MCF 10A (cell line): ENCODE measurements at regions of chr3 and their contacts with region 1.

Region 1: DNA sequence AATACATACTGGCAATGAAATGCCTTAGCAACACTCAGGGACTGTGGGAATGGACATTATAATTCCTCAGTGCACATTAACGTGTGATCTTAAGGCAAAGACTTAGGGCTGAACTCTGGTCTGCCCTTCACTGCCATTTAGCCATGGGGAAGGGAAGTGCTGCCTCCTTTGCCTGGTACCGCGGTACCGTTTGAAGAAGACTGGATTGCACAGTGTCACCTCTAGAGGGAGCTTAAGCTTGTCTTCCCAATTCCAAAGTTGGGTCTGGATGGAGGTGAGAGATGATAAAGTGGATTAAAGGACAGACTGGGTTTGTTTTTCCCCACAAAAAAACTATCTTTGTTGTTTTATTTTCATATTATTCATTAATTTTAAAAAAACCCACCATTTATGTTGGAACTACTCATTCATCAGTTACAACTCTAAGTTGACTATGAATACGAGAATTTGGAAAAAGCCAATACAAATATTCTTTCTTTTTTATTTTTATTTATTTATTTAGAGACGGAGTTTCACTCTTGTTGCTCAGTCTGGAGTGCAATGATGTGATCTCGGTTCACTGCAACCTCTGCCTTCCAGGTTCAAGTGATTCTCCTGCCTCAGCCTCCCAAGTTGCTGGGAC is 60.0 kb upstream of the SYN2 start:
- DNase-seq: peak; percentile 60
- H3K4me3 Mint-ChIP-seq: no peak overlapping the region
- H3K27ac Mint-ChIP-seq: no peak overlapping the region
- H3K4me1 Mint-ChIP-seq: no peaks in the 10 kb centered on the region
- H3K27me3 Mint-ChIP-seq: peaks cover 17% of the 10 kb centered on the region
- CTCF ChIP-seq: peak; percentile 50

Region 2: GRCh38 chr3:11954312-11954934 is 10.3 kb after region 1 on chr3:
- CTCF ChIA-PET with region 1: interaction called, 13 read pairs
- POLR2A ChIA-PET with region 1: interaction called, 3 read pairs
- intact Hi-C with region 1: no loop called
- DNase-seq: peak; percentile 56
- H3K4me3 Mint-ChIP-seq: no peak overlapping the region
- H3K27ac Mint-ChIP-seq: no peak overlapping the region
- H3K4me1 Mint-ChIP-seq: no peaks in the 10 kb centered on the region
- H3K27me3 Mint-ChIP-seq: peaks cover 32% of the 10 kb centered on the region
- CTCF ChIP-seq: no peak

Region 3: DNA sequence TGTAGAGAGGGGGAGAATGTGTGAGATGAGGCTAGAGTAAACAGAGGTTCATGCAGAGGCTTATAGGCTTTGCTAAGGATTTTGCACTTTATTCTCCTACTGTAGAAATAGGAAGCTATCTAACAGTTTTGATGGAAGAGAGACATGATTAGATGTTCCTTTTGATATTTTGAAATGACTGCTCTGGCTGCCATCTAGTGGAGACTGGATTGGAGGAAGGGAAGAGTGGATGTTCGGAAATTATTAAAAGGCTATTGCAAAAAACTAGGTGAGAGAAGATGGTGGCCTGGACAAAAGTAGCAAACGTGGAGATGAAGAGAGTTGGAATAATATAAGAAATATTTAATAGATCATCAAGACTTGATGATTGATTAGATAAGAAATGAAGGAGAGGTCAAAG is 102.2 kb after region 1 on chr3:
- CTCF ChIA-PET with region 1: no interaction called
- POLR2A ChIA-PET with region 1: no interaction called
- intact Hi-C with region 1: loop called (anchors 1 kb)
- DNase-seq: peak; percentile 22
- H3K4me3 Mint-ChIP-seq: no peak overlapping the region
- H3K27ac Mint-ChIP-seq: no peak overlapping the region
- H3K4me1 Mint-ChIP-seq: no peaks in the 10 kb centered on the region
- H3K27me3 Mint-ChIP-seq: peaks cover under 1% of the 10 kb centered on the region
- CTCF ChIP-seq: no peak

Region 4: DNA sequence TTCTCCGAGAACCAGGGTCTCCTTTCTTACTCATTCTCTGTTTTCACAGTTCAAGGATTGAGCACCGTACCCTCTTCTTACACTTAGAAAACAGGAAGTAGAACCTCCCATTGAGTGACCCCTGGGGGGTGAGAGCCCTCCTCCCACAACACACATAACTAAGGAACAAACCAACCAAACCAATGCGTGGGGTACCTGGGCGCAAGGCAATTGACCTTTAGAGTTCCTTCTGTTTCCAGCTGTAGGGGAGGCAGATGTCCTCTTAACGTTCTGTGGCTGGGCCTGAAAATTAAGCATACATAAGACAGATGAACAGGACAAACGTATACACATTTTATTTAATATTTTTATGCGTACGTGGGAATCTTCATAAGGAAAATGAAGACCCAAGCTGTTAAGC is 248.0 kb after region 1 on chr3:
- CTCF ChIA-PET with region 1: no interaction called
- POLR2A ChIA-PET with region 1: no interaction called
- intact Hi-C with region 1: no loop called
- DNase-seq: no peak
- H3K4me3 Mint-ChIP-seq: no peak overlapping the region
- H3K27ac Mint-ChIP-seq: peak overlapping the region; percentile 89
- H3K4me1 Mint-ChIP-seq: peaks cover 51% of the 10 kb centered on the region
- H3K27me3 Mint-ChIP-seq: no peaks in the 10 kb centered on the region
- CTCF ChIP-seq: no peak

Region 5: GRCh38 chr3:12336099-12336498 is 391.9 kb after region 1 on chr3:
- CTCF ChIA-PET with region 1: no interaction called
- POLR2A ChIA-PET with region 1: no interaction called
- intact Hi-C with region 1: no loop called
- DNase-seq: no peak
- H3K4me3 Mint-ChIP-seq: no peak overlapping the region
- H3K27ac Mint-ChIP-seq: no peak overlapping the region
- H3K4me1 Mint-ChIP-seq: peaks cover 9% of the 10 kb centered on the region
- H3K27me3 Mint-ChIP-seq: no peaks in the 10 kb centered on the region
- CTCF ChIP-seq: no peak